Ovary (tissue), 10 donors: ENCODE measurements at regions of chr1 and their contacts with region 1.

Region 1: GRCh38 chr1:226424228-226425003 is 16.5 kb upstream of the PARP1 start:
- DNase-seq: no peak
- H3K4me3 ChIP-seq: no peak overlapping the region
- H3K27ac ChIP-seq: no peak overlapping the region
- H3K4me1 ChIP-seq: no peaks in the 10 kb centered on the region
- H3K27me3 ChIP-seq: no peaks in the 10 kb centered on the region
- CTCF ChIP-seq: peak; percentile 25 to 66 (median 42)
- EP300 ChIP-seq: no peak
- POLR2A ChIP-seq: no peak

Region 2: DNA sequence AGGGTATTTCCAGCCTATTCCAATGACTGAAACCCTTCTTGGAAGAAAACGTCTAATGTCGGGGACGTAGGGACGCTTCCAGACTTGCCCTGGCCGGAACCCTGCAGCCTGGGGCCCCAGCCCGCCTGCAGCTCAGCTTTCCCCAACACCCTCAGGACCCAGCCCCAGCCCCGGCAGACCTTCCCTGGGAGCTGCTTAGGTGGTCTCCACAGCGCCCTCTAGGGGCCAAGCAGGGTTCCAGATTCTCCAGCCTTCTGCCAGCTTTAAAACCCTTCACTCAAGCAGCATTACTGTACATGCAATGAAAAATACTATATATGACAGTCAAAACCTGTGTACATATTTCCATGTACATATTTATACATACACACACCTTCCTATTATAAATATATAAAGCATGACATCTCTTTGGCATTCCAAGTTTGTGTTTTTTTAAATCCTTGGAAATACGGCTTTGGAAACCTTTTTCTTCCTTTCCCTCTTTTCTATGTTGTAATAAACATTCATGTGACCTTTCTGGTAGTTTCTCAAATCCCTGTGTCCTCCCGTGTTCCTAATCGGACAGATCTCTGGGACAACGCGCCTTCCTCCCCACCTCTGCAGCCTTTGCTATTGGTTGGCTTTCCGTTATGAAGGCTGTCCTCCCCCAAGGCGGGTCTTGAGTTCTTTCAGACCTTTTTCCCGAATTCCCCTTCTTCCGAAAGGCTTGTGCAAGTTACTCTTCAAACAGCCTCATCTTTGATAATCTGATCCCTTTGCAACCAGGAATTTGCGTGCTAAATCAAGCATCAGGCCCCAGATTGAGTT is 184.5 kb after region 1 on chr1:
- intact Hi-C with region 1: loop called in 2 of 4 experiments (anchors 10 kb)
- DNase-seq: peak in 4 of 5 donors; percentile 59 to 74 (median 68)
- H3K4me3 ChIP-seq: no peak overlapping the region
- H3K27ac ChIP-seq: no peak overlapping the region
- H3K4me1 ChIP-seq: peaks cover 9% of the 10 kb centered on the region
- H3K27me3 ChIP-seq: no peaks in the 10 kb centered on the region
- CTCF ChIP-seq: peak; percentile 35 to 61 (median 51)
- EP300 ChIP-seq: no peak
- POLR2A ChIP-seq: no peak